Right ventricle myocardium inferior (tissue), 1 donor: ENCODE measurements at regions of chr1 and their contacts with region 1.

Region 1: DNA sequence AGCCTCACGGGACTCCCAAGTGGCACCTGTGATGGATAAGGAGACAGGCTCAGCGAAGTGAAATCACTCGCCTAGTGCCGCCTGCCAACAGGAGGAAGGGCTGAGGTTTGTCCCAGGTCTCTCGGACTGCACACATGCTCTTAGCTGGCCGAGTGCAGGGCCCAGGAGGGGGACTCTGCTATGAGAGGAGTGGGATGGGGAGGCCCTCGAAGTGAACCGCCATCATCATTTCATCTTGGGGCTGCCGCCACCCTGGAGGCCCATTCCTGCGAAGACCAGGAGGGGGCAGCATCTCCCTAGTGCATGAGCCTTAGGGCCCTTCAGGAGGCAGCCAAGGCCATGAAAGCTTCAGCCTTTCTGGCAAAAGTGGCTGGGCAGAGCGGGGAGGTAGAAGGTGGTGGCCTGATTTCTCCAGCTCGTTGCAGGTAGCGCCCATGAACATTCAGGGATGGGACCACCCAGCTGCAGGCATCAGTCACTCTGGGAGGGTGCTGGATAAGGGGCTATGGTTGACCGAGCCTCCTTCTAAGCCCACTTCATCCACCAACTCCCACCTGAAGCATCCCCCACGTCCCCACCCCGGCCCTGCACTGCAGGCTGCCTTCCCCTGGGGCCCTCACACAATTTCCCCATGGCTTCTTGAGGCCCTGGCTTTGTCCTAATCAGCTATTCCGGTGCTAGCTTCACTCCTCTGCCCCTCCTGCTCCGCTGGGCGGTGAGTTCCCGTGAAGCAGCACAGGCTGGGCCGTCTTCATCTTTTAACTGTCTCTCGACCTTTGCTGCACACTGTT is 17.2 kb upstream of the RASSF5 start:
- DNase-seq: peak; percentile 88
- ATAC-seq: peak; percentile 89

Region 2: GRCh38 chr1:206544562-206545257 is 54.5 kb after region 1 on chr1:
- intact Hi-C with region 1: loop called (anchors 5 kb)
- DNase-seq: peak; percentile 79
- ATAC-seq: peak; percentile 62

Region 3: GRCh38 chr1:206573319-206573718 is 83.1 kb after region 1 on chr1:
- intact Hi-C with region 1: no loop called
- DNase-seq: no peak
- ATAC-seq: no peak

Region 4: DNA sequence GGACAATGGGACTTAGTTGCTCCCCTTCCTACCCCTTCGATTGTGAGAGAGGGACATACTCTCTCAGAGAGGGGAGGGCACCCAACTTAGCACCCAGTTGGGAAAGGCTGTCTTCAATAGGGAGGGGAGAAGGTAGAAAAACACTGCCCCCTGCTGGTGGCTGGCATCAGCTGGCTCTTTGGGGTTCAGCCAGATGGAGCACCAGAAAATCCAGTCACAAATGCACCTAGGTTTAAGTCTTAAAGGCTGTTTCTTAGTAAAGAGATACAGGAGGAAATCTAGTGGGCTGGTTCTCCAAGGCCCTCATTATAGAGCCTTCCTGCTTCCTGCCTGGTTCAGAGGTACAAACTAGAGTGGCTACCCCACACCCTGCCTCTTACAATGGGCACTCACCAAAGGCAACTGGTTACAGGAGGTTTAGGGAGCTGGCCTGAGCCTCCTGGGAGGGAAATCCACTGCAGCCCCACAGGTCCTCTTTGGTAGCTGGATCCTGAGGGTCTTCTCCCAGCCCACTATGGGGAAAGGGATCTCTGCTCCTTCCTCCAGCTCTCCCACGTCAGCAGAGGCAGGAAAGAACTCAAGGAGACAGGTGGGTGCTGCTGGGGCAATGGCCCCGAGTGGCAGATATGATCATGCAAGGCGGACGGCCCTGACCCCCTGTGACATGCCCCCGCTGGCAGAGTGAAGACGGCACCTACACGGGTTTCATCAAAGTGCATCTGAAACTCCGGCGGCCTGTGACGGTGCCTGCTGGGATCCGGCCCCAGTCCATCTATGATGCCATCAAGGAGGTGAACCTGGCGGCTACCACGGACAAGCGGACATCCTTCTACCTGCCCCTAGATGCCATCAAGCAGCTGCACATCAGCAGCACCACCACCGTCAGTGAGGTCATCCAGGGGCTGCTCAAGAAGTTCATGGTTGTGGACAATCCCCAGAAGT is 93.8 kb after region 1 on chr1:
- intact Hi-C with region 1: loop called (anchors 1 kb)
- DNase-seq: peak; percentile 79
- ATAC-seq: peak; percentile 54